PC-9 (cell line): ENCODE measurements at regions of chr3 and their contacts with region 1.

Region 1: DNA sequence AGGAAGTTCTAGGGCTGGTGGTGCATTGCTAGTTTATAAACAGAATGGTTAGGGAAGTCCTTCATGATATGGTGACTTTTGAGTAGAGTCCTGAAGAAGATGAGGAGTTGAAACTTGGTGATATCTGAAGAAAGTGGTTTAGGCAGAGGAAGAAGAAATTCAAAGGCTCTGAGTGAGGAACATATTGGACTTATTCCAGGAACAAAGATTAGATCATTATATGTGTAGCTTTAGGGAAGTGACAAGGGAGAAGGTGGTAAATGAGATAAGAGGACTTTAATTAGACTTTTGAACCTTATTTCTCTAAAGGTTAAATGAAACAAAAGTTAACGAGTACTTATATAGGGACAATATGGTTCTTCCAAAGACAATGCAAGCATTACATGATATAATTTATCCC is 286.7 kb downstream of the DOCK3 start:
- DNase-seq: no peak
- H3K4me3 ChIP-seq: no peak overlapping the region
- H3K27ac ChIP-seq: no peak overlapping the region
- H3K4me1 ChIP-seq: no peaks in the 10 kb centered on the region
- H3K27me3 ChIP-seq: no peaks in the 10 kb centered on the region
- CTCF ChIP-seq: no peak

Region 2: GRCh38 chr3:50749822-50750221 is 211.6 kb before region 1 on chr3:
- CTCF ChIA-PET with region 1: interaction called, 12 read pairs
- POLR2A ChIA-PET with region 1: no interaction called
- intact Hi-C with region 1: no loop called
- DNase-seq: no peak
- H3K4me3 ChIP-seq: no peak overlapping the region
- H3K27ac ChIP-seq: no peak overlapping the region
- H3K4me1 ChIP-seq: no peaks in the 10 kb centered on the region
- H3K27me3 ChIP-seq: no peaks in the 10 kb centered on the region
- CTCF ChIP-seq: no peak

Region 3: DNA sequence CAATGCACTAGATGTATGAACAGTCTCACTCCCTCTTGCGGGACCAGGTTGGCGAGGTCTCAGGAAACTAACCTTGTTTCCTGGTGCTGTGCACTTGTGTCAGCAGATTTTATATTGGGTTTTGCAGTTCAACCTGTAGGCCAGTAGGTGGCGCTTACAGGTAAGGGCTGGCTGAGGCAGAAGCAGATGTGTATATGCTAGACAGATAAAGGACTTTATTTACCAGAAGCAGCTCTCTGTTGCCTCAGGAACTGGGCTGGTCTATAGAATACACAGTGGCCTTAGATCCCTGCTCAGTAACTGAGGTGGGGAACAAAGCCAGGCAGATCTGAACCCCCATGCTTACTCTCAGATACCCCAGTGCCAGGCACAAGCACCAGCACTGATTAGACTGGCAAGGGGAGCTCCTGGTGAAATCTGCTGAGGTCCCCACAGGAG is 10.1 kb after region 1 on chr3:
- CTCF ChIA-PET with region 1: no interaction called
- POLR2A ChIA-PET with region 1: no interaction called
- intact Hi-C with region 1: no loop called
- DNase-seq: peak; percentile 56 to 68
- H3K4me3 ChIP-seq: no peak overlapping the region
- H3K27ac ChIP-seq: no peak overlapping the region
- H3K4me1 ChIP-seq: no peaks in the 10 kb centered on the region; the same call in 1 of the 2 replicates
- H3K27me3 ChIP-seq: no peaks in the 10 kb centered on the region
- CTCF ChIP-seq: peak; percentile 89

Region 4: GRCh38 chr3:51845129-51845528 is 883.7 kb after region 1 on chr3:
- CTCF ChIA-PET with region 1: no interaction called
- POLR2A ChIA-PET with region 1: no interaction called
- intact Hi-C with region 1: no loop called
- DNase-seq: no peak
- H3K4me3 ChIP-seq: no peak overlapping the region
- H3K27ac ChIP-seq: no peak overlapping the region
- H3K4me1 ChIP-seq: no peaks in the 10 kb centered on the region
- H3K27me3 ChIP-seq: peaks cover 22% of the 10 kb centered on the region; the same call in 1 of the 2 replicates
- CTCF ChIP-seq: no peak